Heart right ventricle (tissue), 16 donors: ENCODE measurements at regions of chr14 and their contacts with region 1.

Region 1: GRCh38 chr14:95356245-95356869 is 36.6 kb upstream of the CLMN start:
- DNase-seq: no peak
- ATAC-seq: peak in 3 of 8 donors; percentile 28 to 55 (median 43)
- H3K4me3 ChIP-seq: no peak overlapping the region
- H3K27ac ChIP-seq: no peak overlapping the region
- H3K4me1 ChIP-seq: peaks cover 0 to 12% (median 4%) of the 10 kb centered on the region in 9 donors
- H3K27me3 ChIP-seq: peaks cover 0 to 25% (median 11%) of the 10 kb centered on the region in 7 donors
- CTCF ChIP-seq: no peak

Region 2: GRCh38 chr14:95174184-95174792 is 182.1 kb before region 1 on chr14:
- intact Hi-C with region 1: no loop called
- DNase-seq: no peak
- ATAC-seq: peak in 4 of 8 donors; percentile 44 to 59 (median 48)
- H3K4me3 ChIP-seq: no peak overlapping the region
- H3K27ac ChIP-seq: no peak overlapping the region
- H3K4me1 ChIP-seq: peaks cover 0 to 17% (median 0%) of the 10 kb centered on the region in 9 donors
- H3K27me3 ChIP-seq: no peaks in the 10 kb centered on the region
- CTCF ChIP-seq: peak in 8 of 9 donors; percentile 5 to 59 (median 36)

Region 3: GRCh38 chr14:95340201-95340697 is 16.1 kb before region 1 on chr14:
- intact Hi-C with region 1: no loop called
- DNase-seq: no peak
- ATAC-seq: peak in 5 of 8 donors; percentile 24 to 58 (median 47)
- H3K4me3 ChIP-seq: no peak overlapping the region
- H3K27ac ChIP-seq: no peak overlapping the region
- H3K4me1 ChIP-seq: peaks cover 0 to 14% (median 0%) of the 10 kb centered on the region in 9 donors
- H3K27me3 ChIP-seq: peaks cover 0 to 31% (median 7%) of the 10 kb centered on the region in 7 donors
- CTCF ChIP-seq: no peak

Region 4: DNA sequence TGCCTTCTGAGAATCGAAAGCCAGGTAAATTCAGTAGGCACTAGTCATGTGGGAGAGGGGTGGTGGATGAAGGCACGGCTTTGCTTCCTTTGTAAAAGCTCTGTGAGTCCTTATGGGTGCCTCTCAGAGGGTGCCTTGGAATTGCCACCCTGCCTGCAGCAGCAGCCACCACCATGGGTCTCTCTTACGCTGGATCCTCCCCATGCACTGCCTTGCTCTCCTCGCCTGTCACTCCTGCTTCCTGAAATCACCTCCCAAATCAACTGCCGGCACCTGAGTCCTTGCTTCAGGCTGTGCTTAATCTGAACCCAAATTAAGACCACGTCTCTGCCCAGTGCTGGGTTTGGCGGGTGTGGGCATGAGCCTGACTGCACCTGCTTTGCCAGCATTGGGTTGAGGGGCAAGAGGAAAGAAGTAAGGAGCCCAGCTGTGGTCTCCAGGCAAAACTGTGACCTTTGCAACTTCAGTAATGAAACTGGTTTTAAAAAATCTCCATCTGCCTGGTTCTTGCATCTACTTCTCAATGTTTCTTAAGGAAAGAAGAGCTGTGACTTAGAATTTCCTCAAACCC is 19.3 kb after region 1 on chr14:
- intact Hi-C with region 1: loop called in 1 of 10 experiments (anchors 2 kb)
- DNase-seq: no peak
- ATAC-seq: no peak
- H3K4me3 ChIP-seq: no peak overlapping the region
- H3K27ac ChIP-seq: no peak overlapping the region
- H3K4me1 ChIP-seq: no peaks in the 10 kb centered on the region
- H3K27me3 ChIP-seq: peaks cover 0 to 7% (median 4%) of the 10 kb centered on the region in 7 donors
- CTCF ChIP-seq: no peak